ENCODE measurements at regions of chr15 and their contacts with region 1.

Region 1: GRCh38 chr15:86231864-86232721 is 152.4 kb downstream of the AGBL1 start:
- DNase-seq: peak; percentile 18 to 39 (median 28)
- H3K4me3 ChIP-seq: no peak overlapping the region
- H3K4me3 Mint-ChIP-seq: peak overlapping the region in 1 of 8 donors; percentile 13
- H3K27ac ChIP-seq: no peak overlapping the region
- H3K27ac Mint-ChIP-seq: no peak overlapping the region
- H3K4me1 ChIP-seq: no peaks in the 10 kb centered on the region
- H3K4me1 Mint-ChIP-seq: peaks cover 0 to 8% (median 3%) of the 10 kb centered on the region in 4 donors
- H3K27me3 ChIP-seq: peaks cover 8% of the 10 kb centered on the region
- H3K27me3 Mint-ChIP-seq: peaks cover 15% of the 10 kb centered on the region in 2 donors

Region 2: GRCh38 chr15:85858586-85859375 is 373.3 kb before region 1 on chr15:
- CTCF ChIA-PET with region 1: no interaction called
- POLR2A ChIA-PET with region 1: no interaction called
- intact Hi-C with region 1: loop called (anchors 5 kb)
- DNase-seq: peak; percentile 66 to 71 (median 69)
- H3K4me3 ChIP-seq: peak overlapping the region in 1 of 2 donors; percentile 19
- H3K4me3 Mint-ChIP-seq: peak overlapping the region in 7 of 8 donors; percentile 1 to 80 (median 60)
- H3K27ac ChIP-seq: no peak overlapping the region
- H3K27ac Mint-ChIP-seq: peak overlapping the region in 5 of 7 donors; percentile 15 to 82 (median 47)
- H3K4me1 ChIP-seq: no peaks in the 10 kb centered on the region
- H3K4me1 Mint-ChIP-seq: peaks cover 5 to 11% (median 8%) of the 10 kb centered on the region in 4 donors
- H3K27me3 ChIP-seq: peaks cover 5% of the 10 kb centered on the region
- H3K27me3 Mint-ChIP-seq: peaks cover 16 to 18% of the 10 kb centered on the region in 2 donors

Region 3: DNA sequence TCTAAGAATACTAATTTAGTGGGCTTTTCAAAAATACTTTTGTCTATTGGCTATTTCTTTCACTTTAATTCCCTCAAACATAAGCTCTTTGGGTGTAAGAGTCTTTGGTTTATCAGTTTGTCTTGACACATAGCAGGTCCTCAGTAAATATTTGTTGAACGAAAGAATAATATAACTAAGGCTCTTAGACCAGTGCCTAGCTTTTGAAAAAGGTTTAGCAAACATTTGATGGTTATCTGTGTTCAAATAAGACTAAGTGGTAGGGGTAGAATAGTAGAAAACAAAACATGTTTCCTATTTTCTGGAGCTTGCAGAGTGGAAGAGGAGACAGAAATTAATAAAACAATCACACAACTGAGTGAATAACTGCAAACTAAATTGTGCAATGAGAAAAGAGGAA is 15.0 kb before region 1 on chr15:
- CTCF ChIA-PET with region 1: interaction called, 10 read pairs
- POLR2A ChIA-PET with region 1: no interaction called
- intact Hi-C with region 1: no loop called
- DNase-seq: no peak
- H3K4me3 ChIP-seq: no peak overlapping the region
- H3K4me3 Mint-ChIP-seq: peak overlapping the region in 1 of 8 donors; percentile 44
- H3K27ac ChIP-seq: no peak overlapping the region
- H3K27ac Mint-ChIP-seq: no peak overlapping the region
- H3K4me1 ChIP-seq: no peaks in the 10 kb centered on the region
- H3K4me1 Mint-ChIP-seq: peaks cover 0 to 5% (median 0%) of the 10 kb centered on the region in 4 donors
- H3K27me3 ChIP-seq: no peaks in the 10 kb centered on the region
- H3K27me3 Mint-ChIP-seq: peaks cover 9 to 11% of the 10 kb centered on the region in 2 donors

Region 4: DNA sequence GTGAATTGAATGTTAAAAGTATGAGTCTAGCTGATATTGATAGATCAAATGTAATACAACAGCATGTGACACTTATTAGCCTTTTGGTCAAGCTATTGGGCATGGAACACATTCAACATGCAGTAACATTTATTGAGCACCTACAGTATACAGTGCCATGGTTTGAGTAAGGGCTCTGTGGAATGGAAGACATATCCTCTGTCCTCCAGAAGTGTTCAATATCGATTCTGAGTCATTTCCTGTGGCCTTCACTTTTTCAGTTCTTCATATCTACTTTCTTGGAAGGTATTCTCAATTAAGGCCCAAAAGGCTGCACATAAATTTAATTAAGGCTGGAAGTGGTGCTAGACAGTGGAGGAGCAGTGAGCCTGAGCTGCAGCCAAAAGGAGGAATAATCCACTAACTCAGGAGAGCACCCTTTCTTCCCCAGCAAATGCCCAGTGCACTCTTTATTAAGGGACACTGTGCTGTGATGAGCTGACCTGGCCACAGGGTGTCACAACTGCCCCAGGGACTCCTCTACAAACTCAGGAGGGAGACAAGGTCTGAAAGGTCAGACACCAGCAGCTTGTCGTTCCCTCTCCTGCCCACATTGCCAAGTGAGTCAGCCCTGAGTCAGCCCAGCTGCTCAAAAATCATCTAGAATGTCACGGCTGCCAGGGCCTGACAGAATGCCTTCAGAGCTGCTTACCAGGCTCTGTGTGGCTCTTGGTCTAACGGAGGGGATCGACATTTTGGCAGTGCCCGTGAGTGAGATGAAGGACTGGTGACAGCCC is 392.4 kb after region 1 on chr15:
- CTCF ChIA-PET with region 1: interaction called, 3 read pairs
- POLR2A ChIA-PET with region 1: no interaction called
- intact Hi-C with region 1: loop called (anchors 1 kb)
- DNase-seq: peak; percentile 30 to 47 (median 38)
- H3K4me3 ChIP-seq: no peak overlapping the region
- H3K4me3 Mint-ChIP-seq: no peak overlapping the region
- H3K27ac ChIP-seq: no peak overlapping the region
- H3K27ac Mint-ChIP-seq: peak overlapping the region in 2 of 7 donors; percentile 4 to 43
- H3K4me1 ChIP-seq: peaks cover 13% of the 10 kb centered on the region
- H3K4me1 Mint-ChIP-seq: peaks cover 16 to 34% (median 28%) of the 10 kb centered on the region in 4 donors
- H3K27me3 ChIP-seq: no peaks in the 10 kb centered on the region
- H3K27me3 Mint-ChIP-seq: no peaks in the 10 kb centered on the region

Region 5: GRCh38 chr15:86756692-86757091 is 524.6 kb after region 1 on chr15:
- CTCF ChIA-PET with region 1: interaction called, 3 read pairs
- POLR2A ChIA-PET with region 1: no interaction called
- intact Hi-C with region 1: loop called (anchors 5 kb)
- DNase-seq: no peak
- H3K4me3 ChIP-seq: no peak overlapping the region
- H3K4me3 Mint-ChIP-seq: no peak overlapping the region
- H3K27ac ChIP-seq: no peak overlapping the region
- H3K27ac Mint-ChIP-seq: no peak overlapping the region
- H3K4me1 ChIP-seq: no peaks in the 10 kb centered on the region
- H3K4me1 Mint-ChIP-seq: no peaks in the 10 kb centered on the region
- H3K27me3 ChIP-seq: no peaks in the 10 kb centered on the region
- H3K27me3 Mint-ChIP-seq: peaks cover 6 to 18% of the 10 kb centered on the region in 2 donors

Measured in CD4-positive, alpha-beta memory T cell (primary cell).